Thyroid gland (tissue), 4 donors: ENCODE measurements at regions of chr12 and their contacts with region 1.

Region 1: GRCh38 chr12:20212658-20213555 is 155.4 kb upstream of the PDE3A start:
- DNase-seq: peak; percentile 79 to 84
- H3K4me3 ChIP-seq: no peak overlapping the region
- H3K27ac ChIP-seq: peak overlapping the region; percentile 28 to 83 (median 80)
- H3K4me1 ChIP-seq: peaks cover 16 to 37% of the 10 kb centered on the region in 2 donors
- H3K27me3 ChIP-seq: no peaks in the 10 kb centered on the region
- CTCF ChIP-seq: no peak
- POLR2A ChIP-seq: peak in 1 of 2 donors; percentile 42

Region 2: GRCh38 chr12:19744734-19745218 is 468.1 kb before region 1 on chr12:
- intact Hi-C with region 1: loop called (anchors 10 kb)
- DNase-seq: no peak
- H3K4me3 ChIP-seq: no peak overlapping the region
- H3K27ac ChIP-seq: peak overlapping the region in 1 of 3 donors; percentile 1
- H3K4me1 ChIP-seq: peaks cover 0 to 19% of the 10 kb centered on the region in 2 donors
- H3K27me3 ChIP-seq: no peaks in the 10 kb centered on the region
- CTCF ChIP-seq: no peak
- POLR2A ChIP-seq: no peak

Region 3: GRCh38 chr12:19915392-19916195 is 297.3 kb before region 1 on chr12:
- intact Hi-C with region 1: loop called (anchors 10 kb)
- DNase-seq: no peak
- H3K4me3 ChIP-seq: no peak overlapping the region
- H3K27ac ChIP-seq: no peak overlapping the region
- H3K4me1 ChIP-seq: peaks cover 0 to 6% of the 10 kb centered on the region in 2 donors
- H3K27me3 ChIP-seq: no peaks in the 10 kb centered on the region
- CTCF ChIP-seq: peak in 5 of 6 experiments; percentile 15 to 75 (median 52)
- POLR2A ChIP-seq: no peak

Region 4: DNA sequence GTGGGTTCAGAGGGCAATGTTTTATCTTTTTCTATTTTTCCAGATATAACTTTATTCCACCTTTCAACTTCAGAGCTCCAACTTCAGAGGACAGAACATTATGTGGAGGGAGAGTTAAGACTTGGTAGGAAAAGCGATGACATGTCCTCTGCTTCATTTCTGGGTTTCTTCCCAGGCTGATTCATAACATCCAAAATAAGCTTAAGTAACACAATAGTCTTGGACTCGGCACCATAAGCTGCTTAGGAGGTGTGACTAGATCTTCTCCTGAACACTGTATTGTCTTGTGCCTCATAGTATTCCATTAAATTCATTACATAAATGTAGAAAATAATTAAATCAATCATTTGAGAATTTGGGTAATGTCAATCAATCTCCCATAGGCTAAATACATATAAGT is 59.9 kb after region 1 on chr12:
- intact Hi-C with region 1: no loop called
- DNase-seq: no peak
- H3K4me3 ChIP-seq: no peak overlapping the region
- H3K27ac ChIP-seq: no peak overlapping the region
- H3K4me1 ChIP-seq: no peaks in the 10 kb centered on the region
- H3K27me3 ChIP-seq: no peaks in the 10 kb centered on the region
- CTCF ChIP-seq: no peak
- POLR2A ChIP-seq: no peak